Activated CD4-positive, alpha-beta T cell treated with anti-CD3 and anti-CD28 coated beads for 36 hours (primary cell): ENCODE measurements at regions of chr7 and their contacts with region 1.

Region 1: DNA sequence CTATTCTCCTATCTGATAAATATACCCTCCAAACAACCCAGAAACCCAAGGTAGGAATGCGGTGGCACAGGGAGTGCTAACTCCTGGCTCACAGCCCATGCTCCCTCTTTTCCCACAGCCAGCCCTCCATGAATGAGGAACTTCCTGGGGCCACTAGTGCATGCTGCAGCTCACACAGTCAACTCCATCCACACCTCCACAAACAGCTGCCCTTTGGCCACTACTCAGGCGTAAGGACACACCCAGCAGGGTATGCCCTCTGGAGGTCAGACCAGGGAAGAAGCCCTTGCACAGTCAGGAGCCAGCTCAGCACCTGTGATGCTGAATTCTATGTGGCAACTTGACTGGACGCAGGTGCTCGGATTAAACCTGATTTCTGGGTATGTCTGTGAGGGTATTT is 85.2 kb upstream of the PIK3CG start:
- DNase-seq: peak; percentile 34
- ATAC-seq: peak; percentile 30
- H3K4me3 Mint-ChIP-seq: no peak overlapping the region
- H3K27ac Mint-ChIP-seq: no peak overlapping the region
- H3K4me1 Mint-ChIP-seq: peaks cover 17% of the 10 kb centered on the region
- H3K27me3 Mint-ChIP-seq: no peaks in the 10 kb centered on the region

Region 2: DNA sequence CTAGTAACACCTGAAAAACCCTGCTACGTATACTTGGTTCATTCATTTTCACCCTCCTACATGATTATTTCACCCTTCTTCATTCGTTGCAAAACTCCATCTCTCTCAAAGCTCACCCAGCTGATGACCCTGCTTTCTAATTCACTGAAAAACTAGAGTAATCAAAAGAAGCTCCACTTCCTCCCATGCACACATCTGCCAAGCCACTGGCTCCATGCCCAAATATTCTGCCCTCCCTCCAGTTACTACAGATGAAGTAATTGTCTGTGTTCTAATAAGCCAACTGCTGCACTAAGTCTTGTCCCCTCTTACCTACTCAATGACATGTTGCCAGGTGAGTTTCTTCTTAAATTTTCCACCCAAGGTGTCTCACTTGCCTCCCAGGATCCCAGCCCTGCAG is 22.0 kb before region 1 on chr7:
- CTCF ChIA-PET with region 1: no interaction called
- POLR2A ChIA-PET with region 1: no interaction called
- intact Hi-C with region 1: loop called in 1 of 2 experiments (anchors 2 kb)
- DNase-seq: no peak
- ATAC-seq: no peak
- H3K4me3 Mint-ChIP-seq: no peak overlapping the region
- H3K27ac Mint-ChIP-seq: no peak overlapping the region
- H3K4me1 Mint-ChIP-seq: peaks cover 3% of the 10 kb centered on the region
- H3K27me3 Mint-ChIP-seq: no peaks in the 10 kb centered on the region